Activated CD4-positive, alpha-beta T cell treated with anti-CD3 and anti-CD28 coated beads for 36 hours (primary cell): ENCODE measurements at regions of chr12 and their contacts with region 1.

Region 1: DNA sequence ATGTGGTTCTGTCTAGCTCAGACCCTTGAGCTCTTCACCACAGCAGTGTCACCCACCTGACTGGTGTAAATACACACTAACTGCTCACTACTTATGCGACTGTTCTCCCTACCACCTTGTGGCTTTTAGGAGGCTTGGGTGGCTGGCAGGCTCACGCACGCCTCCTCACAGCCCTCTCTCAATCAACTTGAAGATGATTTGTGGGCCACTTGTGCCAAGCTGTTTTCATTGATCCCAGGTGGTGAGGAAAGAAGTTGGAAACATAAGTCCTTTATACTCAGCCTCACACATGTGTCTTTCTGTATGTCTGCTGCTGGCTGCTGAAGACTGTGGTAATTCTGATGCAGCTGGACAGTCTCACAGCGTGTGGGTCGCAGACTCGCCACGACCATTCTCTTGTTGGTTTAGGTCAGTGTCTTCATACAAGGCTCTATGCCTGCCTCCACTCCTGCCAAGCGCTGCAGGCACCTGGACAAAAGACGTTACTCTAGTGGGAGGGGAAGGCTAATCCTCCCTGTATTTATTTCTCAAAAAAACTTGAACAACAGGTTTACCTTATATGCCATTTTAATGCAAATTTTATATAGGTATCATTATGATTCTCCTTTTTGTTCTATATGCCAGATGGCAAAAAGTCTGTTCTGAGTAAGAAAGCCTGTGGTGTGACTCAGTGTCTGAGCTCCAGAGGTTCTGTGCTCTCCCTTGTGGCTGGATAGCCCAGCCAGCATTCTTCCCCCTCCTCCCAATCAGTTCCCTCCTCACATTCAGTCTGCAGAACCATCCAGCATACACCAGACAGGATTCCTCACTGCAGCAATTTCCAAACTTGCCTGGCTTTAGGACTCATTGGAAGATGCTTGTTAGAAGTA is 115.6 kb downstream of the DIP2B start:
- DNase-seq: peak; percentile 59
- ATAC-seq: peak; percentile 86
- H3K4me3 Mint-ChIP-seq: no peak overlapping the region
- H3K27ac Mint-ChIP-seq: peak overlapping the region; percentile 86
- H3K4me1 Mint-ChIP-seq: peaks cover 64% of the 10 kb centered on the region
- H3K27me3 Mint-ChIP-seq: no peaks in the 10 kb centered on the region

Region 2: GRCh38 chr12:49825360-49825754 is 795.0 kb before region 1 on chr12:
- CTCF ChIA-PET with region 1: no interaction called
- POLR2A ChIA-PET with region 1: no interaction called
- intact Hi-C with region 1: no loop called
- DNase-seq: no peak
- ATAC-seq: no peak
- H3K4me3 Mint-ChIP-seq: no peak overlapping the region
- H3K27ac Mint-ChIP-seq: no peak overlapping the region
- H3K4me1 Mint-ChIP-seq: peaks cover 42% of the 10 kb centered on the region
- H3K27me3 Mint-ChIP-seq: no peaks in the 10 kb centered on the region

Region 3: GRCh38 chr12:50542448-50542847 is 77.9 kb before region 1 on chr12:
- CTCF ChIA-PET with region 1: interaction called, 3 read pairs
- POLR2A ChIA-PET with region 1: no interaction called
- intact Hi-C with region 1: loop called in 1 of 2 experiments (anchors 1 kb)
- DNase-seq: peak; percentile 59
- ATAC-seq: peak; percentile 98
- H3K4me3 Mint-ChIP-seq: no peak overlapping the region
- H3K27ac Mint-ChIP-seq: peak overlapping the region; percentile 92
- H3K4me1 Mint-ChIP-seq: peaks cover 61% of the 10 kb centered on the region
- H3K27me3 Mint-ChIP-seq: no peaks in the 10 kb centered on the region

Region 4: GRCh38 chr12:50550530-50551223 is 69.7 kb before region 1 on chr12:
- CTCF ChIA-PET with region 1: interaction called, 5 read pairs
- POLR2A ChIA-PET with region 1: interaction called, 3 read pairs
- intact Hi-C with region 1: loop called in 1 of 2 experiments (anchors 2 kb)
- DNase-seq: no peak
- ATAC-seq: no peak
- H3K4me3 Mint-ChIP-seq: no peak overlapping the region
- H3K27ac Mint-ChIP-seq: no peak overlapping the region
- H3K4me1 Mint-ChIP-seq: peaks cover 66% of the 10 kb centered on the region
- H3K27me3 Mint-ChIP-seq: no peaks in the 10 kb centered on the region

Region 5: DNA sequence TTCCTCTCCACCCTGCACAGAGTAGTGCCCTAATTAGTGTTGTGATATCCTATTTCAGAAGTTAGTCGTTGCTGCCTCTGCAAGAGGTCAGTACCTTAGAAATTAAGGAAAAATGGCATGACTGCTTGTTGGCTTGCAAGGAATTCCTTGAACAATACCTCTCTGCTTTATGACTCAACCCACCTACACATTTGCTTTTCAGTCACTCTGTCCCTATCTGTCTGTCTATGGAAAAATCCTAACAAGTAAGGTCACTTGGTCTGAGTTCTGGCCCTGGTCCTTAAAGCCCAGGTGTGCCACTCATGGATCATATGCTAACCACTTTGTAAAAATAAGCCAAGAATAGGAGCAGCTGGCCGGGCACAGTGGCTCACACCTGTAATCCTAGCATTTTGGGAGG is 27.1 kb after region 1 on chr12:
- CTCF ChIA-PET with region 1: no interaction called
- POLR2A ChIA-PET with region 1: no interaction called
- intact Hi-C with region 1: no loop called
- DNase-seq: no peak
- ATAC-seq: no peak
- H3K4me3 Mint-ChIP-seq: no peak overlapping the region
- H3K27ac Mint-ChIP-seq: no peak overlapping the region
- H3K4me1 Mint-ChIP-seq: peaks cover 2% of the 10 kb centered on the region
- H3K27me3 Mint-ChIP-seq: no peaks in the 10 kb centered on the region

Region 6: DNA sequence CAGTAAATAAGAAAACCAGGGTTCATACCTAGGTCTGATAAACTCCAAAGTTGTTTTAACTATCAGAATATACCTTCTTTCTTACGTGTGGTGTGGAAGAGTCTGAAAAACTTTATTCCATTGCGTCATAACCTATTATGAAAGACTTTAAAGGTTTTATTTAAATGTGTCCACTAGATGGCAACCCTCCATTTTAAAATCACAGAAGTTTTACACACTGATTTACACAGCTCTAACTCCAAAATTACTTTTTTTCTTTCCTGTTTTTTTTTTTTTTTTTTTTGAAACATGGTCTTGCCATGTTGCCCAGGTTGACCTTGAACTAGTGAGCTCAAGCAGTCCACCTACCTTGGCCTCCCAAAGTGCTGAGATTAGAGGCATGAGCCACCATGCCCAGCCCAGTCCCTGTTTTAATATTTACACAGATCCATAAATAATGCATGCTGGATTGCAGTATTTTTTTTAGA is 205.1 kb after region 1 on chr12:
- CTCF ChIA-PET with region 1: no interaction called
- POLR2A ChIA-PET with region 1: no interaction called
- intact Hi-C with region 1: no loop called
- DNase-seq: no peak
- ATAC-seq: peak; percentile 61
- H3K4me3 Mint-ChIP-seq: no peak overlapping the region
- H3K27ac Mint-ChIP-seq: peak overlapping the region; percentile 35
- H3K4me1 Mint-ChIP-seq: peaks cover 6% of the 10 kb centered on the region
- H3K27me3 Mint-ChIP-seq: no peaks in the 10 kb centered on the region